AG04449 (cell line): ENCODE measurements at regions of chr9 and their contacts with region 1.

Region 1: DNA sequence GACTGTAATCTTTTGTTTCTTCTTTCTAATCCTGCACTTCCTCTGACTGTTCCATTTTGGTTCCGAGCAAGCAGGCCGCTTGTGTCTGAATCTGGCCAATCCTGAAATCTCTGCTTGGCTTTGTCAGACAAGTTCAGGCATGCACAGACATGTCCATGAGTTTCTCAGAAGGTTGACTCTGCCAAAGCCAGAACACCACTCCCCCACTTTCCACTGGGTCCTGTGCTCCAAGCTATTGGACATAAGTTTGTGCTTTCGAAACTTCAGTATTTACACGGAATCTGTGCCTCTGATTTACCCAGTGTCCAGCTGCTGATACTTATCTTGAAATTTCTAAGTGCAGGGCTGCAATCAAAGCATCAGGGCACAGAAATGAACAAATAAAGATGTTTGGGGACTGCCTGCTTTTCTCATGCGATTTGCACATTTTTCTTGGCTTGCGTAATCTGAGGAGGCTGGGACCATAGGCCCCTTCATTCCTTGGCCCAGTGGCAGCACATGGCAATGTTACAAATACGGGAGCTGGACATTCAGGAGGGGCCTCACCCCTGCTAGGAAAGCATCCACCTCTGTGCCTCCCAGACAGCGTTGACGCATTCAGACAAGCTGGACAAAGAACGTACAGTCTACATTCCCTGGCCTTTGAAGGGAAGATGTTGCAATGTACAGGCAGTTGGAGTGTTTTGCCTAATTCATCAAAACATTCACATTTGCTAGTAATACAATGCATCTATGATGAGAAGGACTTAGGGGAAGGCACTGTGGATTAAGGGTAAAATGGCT is 209.2 kb upstream of the PAPPA start:
- DNase-seq: peak; percentile 99
- H3K4me3 ChIP-seq: no peak overlapping the region
- CTCF ChIP-seq: no peak

Region 2: DNA sequence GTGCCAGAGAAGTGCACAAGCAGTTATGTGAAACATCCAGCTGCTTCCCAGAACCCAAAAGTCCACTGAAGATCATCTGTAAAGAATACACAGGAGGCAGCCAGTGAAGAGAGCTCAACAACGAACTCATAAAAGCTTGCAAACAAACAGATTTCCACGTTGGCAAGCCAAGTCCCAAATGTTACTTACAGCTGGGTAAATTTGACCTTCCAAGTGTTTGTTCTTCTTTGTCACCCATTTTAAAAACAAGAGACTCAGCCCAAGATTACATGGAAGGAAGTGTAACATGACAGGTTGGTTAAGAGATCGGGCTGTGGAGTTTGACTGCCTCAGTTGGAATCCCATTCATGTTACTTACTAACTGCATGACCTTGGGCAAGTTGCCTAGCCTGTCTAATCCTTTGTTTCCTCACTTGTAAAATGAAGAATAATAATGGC is 34.3 kb after region 1 on chr9:
- CTCF ChIA-PET with region 1: no interaction called
- POLR2A ChIA-PET with region 1: no interaction called
- DNase-seq: no peak
- H3K4me3 ChIP-seq: no peak overlapping the region
- CTCF ChIP-seq: no peak

Region 3: DNA sequence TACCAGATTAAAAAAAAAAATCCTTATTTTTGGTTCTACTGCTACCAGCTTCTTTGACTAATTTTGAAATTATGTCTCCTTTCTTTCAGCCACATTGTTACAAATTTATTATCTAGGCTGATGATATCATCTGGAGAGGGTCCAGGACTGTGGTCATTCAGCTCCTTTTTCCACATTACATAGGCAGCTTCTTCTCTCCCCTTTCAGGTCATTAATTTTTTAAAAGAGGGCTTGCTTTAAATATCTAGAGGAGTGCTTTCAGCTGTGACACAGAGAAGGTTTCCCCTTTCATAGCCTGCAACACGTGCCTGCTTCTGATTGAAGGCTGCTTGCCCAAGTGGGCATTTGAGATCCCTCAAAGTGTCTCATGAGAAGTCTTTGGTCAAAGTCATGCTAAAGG is 53.6 kb after region 1 on chr9:
- CTCF ChIA-PET with region 1: no interaction called
- POLR2A ChIA-PET with region 1: interaction called, 10 read pairs
- DNase-seq: no peak
- H3K4me3 ChIP-seq: no peak overlapping the region
- CTCF ChIP-seq: no peak

Region 4: GRCh38 chr9:116096853-116097252 is 152.5 kb after region 1 on chr9:
- CTCF ChIA-PET with region 1: no interaction called
- POLR2A ChIA-PET with region 1: no interaction called
- DNase-seq: no peak
- H3K4me3 ChIP-seq: no peak overlapping the region
- CTCF ChIP-seq: no peak

Region 5: GRCh38 chr9:116156621-116157314 is 212.4 kb after region 1 on chr9:
- CTCF ChIA-PET with region 1: interaction called, 3 read pairs
- POLR2A ChIA-PET with region 1: interaction called, 13 read pairs
- DNase-seq: no peak
- H3K4me3 ChIP-seq: peak overlapping the region; percentile 87
- CTCF ChIP-seq: no peak